ENCODE measurements at regions of chr3 and their contacts with region 1.

Region 1: DNA sequence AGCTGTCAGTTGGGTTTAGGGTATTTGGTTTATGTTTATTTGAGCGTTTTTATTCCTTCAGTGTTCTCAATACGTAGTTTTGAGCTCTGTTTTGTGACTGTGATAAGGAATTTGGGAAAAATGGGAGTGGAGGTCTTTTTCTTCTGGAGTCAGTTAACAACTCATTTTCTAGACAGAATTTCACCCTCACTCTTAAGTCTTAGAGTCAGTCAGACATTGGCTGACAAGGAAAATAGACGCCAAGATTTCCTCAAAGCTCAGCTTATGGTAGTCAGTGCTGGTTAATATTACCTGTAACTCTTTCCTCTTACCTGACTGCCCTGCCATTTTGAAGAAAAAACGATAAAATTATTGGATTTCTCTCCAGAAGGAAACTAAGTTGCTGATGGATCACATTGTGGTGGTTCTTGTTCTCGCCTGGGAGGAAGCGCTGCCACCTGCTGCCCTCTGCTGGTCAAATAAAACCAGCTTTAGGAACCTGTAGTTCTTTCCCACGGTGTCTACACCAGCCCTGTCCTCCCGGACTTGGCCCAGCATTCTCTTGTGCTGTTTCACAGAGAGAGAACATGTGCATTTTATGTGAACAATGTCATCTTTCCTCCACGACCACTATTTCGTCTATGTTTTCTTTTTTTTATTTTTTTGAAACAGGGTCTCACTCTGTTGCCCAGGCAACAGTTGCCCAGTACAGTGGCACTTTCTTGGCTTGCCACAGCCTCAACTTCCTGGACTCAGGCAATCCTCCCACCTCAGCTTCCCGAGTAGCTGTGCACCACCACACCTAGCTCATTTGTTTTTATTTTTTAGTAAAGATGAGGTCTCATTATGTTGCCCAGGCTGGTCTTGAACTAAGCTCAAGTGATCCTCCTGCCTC is 41.4 kb upstream of the UMPS start:
- DNase-seq: peak; percentile 84
- CTCF ChIP-seq: peak; percentile 88

Region 2: DNA sequence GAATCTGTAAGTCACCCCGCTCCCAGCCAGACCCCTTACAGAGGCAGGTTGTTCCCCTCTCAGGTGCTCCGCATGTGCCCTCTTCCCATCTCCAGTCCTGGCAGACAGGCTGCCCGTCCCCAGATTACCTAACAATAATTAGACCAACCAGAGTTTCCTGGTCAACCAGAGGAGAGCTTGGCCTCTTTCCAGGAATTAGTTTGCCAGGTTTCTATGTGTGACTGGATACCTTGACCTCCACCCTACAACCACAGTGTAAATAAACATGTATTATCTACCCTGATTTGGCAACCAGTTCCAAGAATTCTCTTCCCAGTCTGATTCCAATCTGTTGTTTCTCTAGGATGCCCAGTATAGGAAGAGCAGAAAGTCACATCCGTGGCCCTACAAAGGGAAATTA is 136.6 kb before region 1 on chr3:
- CTCF ChIA-PET with region 1: interaction called, 305 read pairs
- POLR2A ChIA-PET with region 1: no interaction called
- DNase-seq: no peak
- CTCF ChIP-seq: no peak

Region 3: DNA sequence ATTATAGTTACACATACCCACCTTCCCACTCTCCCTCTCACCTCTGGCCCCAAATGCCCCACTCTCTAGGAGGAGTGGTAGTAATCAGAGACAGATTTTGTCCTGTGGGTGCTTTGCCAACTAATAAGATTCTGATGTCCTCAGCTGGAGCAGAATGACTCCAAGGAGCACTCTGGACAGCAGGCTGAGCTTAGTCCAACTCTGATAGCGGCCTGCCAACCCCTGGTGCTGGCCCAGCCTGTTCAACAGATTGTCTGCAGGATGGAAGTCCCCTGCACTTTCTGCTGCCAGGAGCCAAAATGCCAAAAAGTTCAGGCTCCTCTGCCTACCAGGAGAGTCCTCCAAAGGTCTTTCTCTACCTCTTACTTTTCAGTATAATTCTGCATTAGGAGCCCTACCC is 119.1 kb before region 1 on chr3:
- CTCF ChIA-PET with region 1: interaction called, 305 read pairs
- POLR2A ChIA-PET with region 1: no interaction called
- DNase-seq: no peak
- CTCF ChIP-seq: no peak

Region 4: DNA sequence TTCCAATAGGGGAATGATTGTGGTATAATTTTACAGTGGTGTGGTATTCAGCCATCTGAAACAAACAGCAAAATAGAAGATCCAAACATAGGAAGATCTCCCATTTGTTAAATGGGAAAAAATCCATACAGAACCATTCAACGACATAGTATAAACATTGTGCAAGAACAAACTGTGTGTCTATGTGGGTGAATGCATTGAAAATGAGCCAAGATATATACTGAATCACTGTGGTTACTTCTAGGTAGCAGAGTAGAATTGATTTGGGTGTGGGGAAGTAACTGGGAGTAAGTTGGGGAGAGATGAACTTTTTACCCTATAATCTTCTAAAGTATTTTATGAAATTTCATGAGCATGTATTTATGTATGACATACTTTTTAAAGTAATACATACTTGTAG is 81.7 kb before region 1 on chr3:
- CTCF ChIA-PET with region 1: interaction called, 14 read pairs
- POLR2A ChIA-PET with region 1: no interaction called
- DNase-seq: no peak
- CTCF ChIP-seq: no peak

Region 5: DNA sequence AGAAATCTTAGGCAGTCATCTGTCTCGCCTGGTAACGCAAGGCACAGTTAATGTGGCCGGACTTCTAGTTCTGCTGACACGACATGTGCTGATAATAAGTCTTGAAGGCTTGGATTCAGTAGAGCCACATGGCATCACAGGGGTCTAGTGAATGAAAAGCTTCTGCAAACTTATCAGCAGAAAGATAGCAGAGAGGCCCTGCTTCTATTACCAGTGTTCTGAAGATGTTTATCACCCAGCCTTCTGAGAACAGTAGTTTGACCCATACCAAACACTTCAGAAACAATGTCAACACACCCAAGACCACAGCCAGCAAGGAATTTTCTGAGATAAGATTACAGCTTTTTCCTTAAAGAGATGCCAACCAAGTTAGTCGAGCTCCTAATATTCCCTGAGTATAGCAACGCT is 61.3 kb before region 1 on chr3:
- CTCF ChIA-PET with region 1: interaction called, 17 read pairs
- POLR2A ChIA-PET with region 1: no interaction called
- DNase-seq: no peak
- CTCF ChIP-seq: no peak

Region 6: DNA sequence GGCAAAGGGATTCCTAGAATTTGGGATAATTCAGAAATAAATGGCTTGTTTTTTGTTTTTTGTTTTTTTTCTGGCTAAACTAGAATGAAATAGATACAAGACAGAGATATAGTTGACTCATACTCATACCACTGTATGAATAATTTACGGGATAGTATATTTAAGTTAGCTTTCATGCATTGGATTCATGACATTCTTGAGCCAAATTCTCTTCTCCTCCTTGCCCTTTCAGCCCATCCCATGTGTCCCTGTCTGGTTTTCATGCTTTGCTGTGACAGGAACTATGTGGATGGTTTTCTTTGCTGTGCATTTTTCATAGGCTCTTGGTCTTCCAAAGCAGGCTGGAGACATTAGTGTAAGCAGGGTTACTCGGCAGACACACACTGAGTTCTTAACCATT is 25.1 kb before region 1 on chr3:
- CTCF ChIA-PET with region 1: interaction called, 23 read pairs
- POLR2A ChIA-PET with region 1: no interaction called
- DNase-seq: no peak
- CTCF ChIP-seq: no peak

Region 7: GRCh38 chr3:124905849-124906248 is 217.0 kb after region 1 on chr3:
- CTCF ChIA-PET with region 1: interaction called, 10 read pairs
- POLR2A ChIA-PET with region 1: no interaction called
- DNase-seq: no peak
- CTCF ChIP-seq: no peak